HEK293T (cell line): ENCODE measurements at regions of chr6 and their contacts with region 1.

Region 1: DNA sequence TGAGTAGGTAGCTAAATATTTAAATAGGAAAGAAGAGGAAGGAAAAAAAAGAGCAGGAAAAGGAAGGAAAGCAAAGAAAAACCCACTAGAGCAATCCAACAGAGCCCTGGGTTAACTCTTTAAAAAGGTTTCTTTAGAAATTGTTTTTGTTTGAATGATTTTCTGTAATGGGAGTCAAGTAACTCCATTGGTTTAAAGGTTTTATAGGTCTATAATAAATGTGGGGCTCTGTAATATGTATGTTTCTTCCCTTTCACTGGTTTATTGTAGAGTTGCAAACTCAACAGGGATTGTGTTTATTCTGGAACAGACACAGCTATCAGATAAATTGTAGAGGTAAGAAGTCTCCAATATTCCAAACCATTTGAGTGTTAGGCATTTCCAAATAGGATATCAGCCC is 10.9 kb downstream of the PLEKHG1 start:
- DNase-seq: no peak

Region 2: GRCh38 chr6:150600301-150601017 is 10.1 kb before region 1 on chr6:
- CTCF ChIA-PET with region 1: no interaction called
- POLR2A ChIA-PET with region 1: interaction called, 10 read pairs
- DNase-seq: peak; percentile 90